Sciatic nerve (tissue), 2 donors: ENCODE measurements at regions of chr11 and their contacts with region 1.

Region 1: DNA sequence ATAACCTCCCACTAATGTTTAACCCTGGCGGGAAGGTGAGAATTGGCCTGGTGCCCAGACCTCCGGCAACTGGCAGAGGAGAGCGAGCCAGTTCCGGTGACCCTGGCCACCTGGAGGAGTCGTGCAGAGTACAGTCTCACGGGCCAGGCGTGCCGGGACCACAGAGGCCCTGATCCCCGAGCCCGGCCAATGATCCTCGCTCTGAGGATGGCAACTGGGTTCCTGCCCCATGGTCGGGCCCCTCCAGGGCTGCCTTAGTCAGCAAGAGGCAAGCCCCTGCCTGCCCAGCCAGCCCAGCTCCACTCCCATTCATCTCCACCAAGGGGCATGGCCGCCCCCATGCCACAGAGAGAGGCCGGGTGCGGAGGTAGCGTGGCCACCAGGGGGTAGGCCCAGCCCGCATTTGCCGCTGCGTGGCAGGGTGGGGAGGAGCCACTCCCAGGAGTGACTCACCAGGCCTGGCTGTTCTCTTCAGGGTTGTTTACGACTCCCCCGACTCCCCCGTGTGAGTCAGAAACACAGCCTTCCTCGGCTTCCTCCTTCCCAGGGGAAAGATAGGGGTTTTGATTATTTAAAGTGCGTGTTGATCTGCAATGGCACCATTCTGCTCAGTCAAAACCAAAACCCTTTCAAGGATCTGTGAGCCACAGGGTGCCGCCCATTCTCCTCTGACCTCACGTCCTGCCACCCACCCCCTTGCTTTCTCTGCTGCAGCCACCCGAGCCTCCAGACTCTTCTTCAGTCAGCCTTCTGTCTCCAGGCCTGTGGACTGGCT is at the start of gene SLC25A45:
- DNase-seq: peak; percentile 92
- ATAC-seq: peak; percentile 93
- total RNA-seq, gene SLC25A45: 12.0 TPM

Region 2: DNA sequence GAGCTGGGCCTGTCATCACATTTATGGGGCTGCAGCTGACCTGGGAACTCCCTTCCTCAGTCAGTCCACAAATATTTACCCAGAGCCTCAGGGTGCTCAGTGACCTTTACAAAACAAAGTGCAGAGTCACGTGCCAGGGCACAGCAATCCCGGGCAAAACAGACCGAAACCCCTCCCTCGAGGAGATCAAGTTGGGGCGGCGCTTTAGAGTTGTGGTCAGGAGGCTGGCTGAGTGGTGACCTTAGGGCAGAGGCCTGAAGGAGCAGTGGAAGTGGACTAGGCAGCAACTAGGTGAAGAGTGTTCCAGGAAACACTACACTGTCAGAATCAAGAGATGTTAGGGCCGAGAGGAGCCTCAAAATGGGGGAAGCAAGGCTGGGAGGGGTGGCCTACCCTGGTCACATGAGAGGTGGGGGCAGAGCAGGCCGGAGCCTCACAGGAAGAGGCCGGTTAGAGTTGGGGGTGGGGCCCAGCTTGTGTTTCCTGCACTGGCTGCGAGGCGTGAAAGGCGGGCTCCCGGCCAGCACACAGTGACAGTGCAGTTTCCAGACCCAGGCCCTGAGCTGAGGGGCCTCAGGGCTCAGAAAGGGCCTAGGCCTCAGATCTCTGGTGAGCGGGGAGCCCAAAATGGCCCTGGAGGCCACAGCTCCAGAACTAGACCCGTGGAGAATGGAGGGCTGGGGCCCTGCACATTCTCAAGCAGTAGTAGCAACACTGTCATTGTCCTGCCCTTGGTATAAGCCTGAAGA is 36.7 kb after region 1 on chr11:
- intact Hi-C with region 1: loop called (anchors 5 kb)
- DNase-seq: peak; percentile 98
- ATAC-seq: peak; percentile 64

Region 3: DNA sequence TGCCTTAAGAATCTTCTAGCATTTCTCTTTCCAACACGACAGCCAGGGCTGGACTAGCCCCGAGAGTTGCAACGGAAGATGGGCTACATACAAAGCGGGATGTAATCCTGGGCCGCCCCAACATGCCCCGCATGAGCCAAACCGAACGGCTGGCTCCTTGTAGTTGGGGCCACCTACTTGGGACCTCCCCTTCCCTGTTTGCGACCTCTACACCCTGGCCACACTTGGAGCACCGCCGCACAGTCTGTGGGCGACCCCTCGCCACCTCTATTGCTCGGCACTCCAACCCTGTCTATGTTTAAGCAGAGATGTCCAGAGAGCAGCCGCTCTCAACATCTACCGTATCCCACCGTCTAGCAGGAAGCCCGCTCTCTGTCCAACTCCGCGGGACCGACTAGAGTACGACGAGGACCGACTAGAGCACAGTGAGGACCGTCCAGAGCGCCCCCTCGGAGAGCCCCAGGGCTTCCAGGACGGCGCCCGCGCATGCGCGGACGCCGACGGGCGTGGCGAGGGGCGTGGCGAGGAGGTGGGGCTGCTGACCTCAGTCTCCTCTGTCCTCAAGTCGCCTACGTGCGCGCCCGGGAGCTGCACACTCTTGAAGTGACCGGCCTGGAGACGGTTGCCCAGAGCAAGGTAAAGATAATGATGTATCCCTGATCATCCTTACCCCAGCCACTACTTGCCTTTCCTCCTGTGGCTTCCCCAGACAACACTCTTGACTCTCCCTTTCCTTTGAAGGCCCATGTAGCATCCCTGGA is 72.7 kb after region 1 on chr11:
- intact Hi-C with region 1: loop called (anchors 10 kb)
- DNase-seq: peak; percentile 95
- ATAC-seq: peak; percentile 95

Region 4: GRCh38 chr11:65516135-65516935 is 134.1 kb after region 1 on chr11:
- intact Hi-C with region 1: loop called (anchors 10 kb)
- DNase-seq: peak; percentile 44
- ATAC-seq: peak; percentile 31

Region 5: GRCh38 chr11:65593518-65594298 is 211.5 kb after region 1 on chr11:
- intact Hi-C with region 1: loop called (anchors 10 kb)
- DNase-seq: peak; percentile 73
- ATAC-seq: peak; percentile 50